IMR-90 (cell line): ENCODE measurements at regions of chr9 and their contacts with region 1.

Region 1: DNA sequence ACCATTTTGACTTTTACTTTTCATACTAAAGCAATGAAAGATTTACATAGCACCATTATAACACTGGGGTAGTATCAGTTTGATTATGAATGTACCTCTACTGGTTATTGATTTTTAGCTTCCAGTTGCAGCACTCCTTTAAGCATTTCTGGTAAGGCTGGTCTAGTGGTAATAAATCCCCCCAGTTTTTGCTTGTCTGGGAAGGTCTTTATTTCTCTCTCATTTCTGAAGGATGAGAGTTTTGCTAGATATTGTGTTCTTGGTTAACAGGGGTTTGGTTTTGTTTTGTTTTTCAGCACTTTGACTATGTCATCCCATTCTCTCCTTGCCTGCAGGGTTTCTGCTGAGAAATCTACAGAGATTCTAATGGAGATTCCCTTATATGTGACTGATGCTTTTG is 26.9 kb upstream of the IGFBPL1 start:
- DNase-seq: no peak
- ATAC-seq: no peak
- H3K4me3 ChIP-seq: no peak overlapping the region
- H3K27ac ChIP-seq: no peak overlapping the region
- H3K4me1 ChIP-seq: no peaks in the 10 kb centered on the region
- H3K27me3 ChIP-seq: peaks cover 7% of the 10 kb centered on the region
- CTCF ChIP-seq: no peak
- POLR2A ChIP-seq: no peak
- RAD21 ChIP-seq: no peak

Region 2: GRCh38 chr9:38017149-38017884 is 433.8 kb before region 1 on chr9:
- CTCF ChIA-PET with region 1: no interaction called
- POLR2A ChIA-PET with region 1: no interaction called
- dilution Hi-C with region 1: no loop called
- in situ Hi-C with region 1: no loop called
- intact Hi-C with region 1: no loop called
- DNase-seq: peak; percentile 62
- ATAC-seq: peak; percentile 34
- H3K4me3 ChIP-seq: no peak overlapping the region
- H3K27ac ChIP-seq: peak overlapping the region; percentile 65
- H3K4me1 ChIP-seq: peaks cover 41% of the 10 kb centered on the region
- H3K27me3 ChIP-seq: no peaks in the 10 kb centered on the region
- CTCF ChIP-seq: peak; percentile 29; the same call in 1 of the 2 replicates
- POLR2A ChIP-seq: no peak
- RAD21 ChIP-seq: peak; percentile 24; the same call in 1 of the 2 replicates

Region 3: GRCh38 chr9:38478211-38478610 is 27.0 kb after region 1 on chr9:
- CTCF ChIA-PET with region 1: no interaction called
- POLR2A ChIA-PET with region 1: no interaction called
- dilution Hi-C with region 1: no loop called
- in situ Hi-C with region 1: no loop called
- intact Hi-C with region 1: no loop called
- DNase-seq: no peak
- ATAC-seq: no peak
- H3K4me3 ChIP-seq: no peak overlapping the region
- H3K27ac ChIP-seq: no peak overlapping the region
- H3K4me1 ChIP-seq: no peaks in the 10 kb centered on the region
- H3K27me3 ChIP-seq: 0 out of 2 replicates have a peak, but pooled peaks cover 3% of the 10 kb centered on the region
- CTCF ChIP-seq: no peak
- POLR2A ChIP-seq: no peak
- RAD21 ChIP-seq: no peak

Region 4: DNA sequence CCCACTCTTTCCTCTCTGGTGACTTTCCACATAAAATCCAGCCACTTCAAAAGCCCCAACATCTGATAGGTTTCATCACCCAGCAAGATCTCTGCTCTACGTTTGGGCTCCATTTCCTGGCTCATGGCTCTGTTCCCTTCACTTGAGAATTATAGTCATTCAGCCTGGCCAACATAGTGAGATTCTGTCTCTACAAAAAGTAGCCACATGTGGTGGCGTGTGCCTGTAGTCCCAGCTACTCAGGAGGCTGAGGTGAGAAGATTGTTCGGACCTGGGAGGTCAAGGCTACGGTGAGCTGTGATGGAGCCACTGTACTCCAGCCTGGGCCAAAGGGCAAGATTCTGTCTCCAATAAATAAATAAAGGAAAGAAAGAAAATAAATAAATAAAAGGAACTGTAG is 56.4 kb after region 1 on chr9:
- CTCF ChIA-PET with region 1: no interaction called
- POLR2A ChIA-PET with region 1: no interaction called
- dilution Hi-C with region 1: no loop called
- in situ Hi-C with region 1: loop called (anchors 10 kb)
- intact Hi-C with region 1: no loop called
- DNase-seq: no peak
- ATAC-seq: no peak
- H3K4me3 ChIP-seq: no peak overlapping the region
- H3K27ac ChIP-seq: no peak overlapping the region
- H3K4me1 ChIP-seq: no peaks in the 10 kb centered on the region
- H3K27me3 ChIP-seq: peaks cover 1% of the 10 kb centered on the region; the same call in 1 of the 2 replicates
- CTCF ChIP-seq: no peak
- POLR2A ChIP-seq: no peak
- RAD21 ChIP-seq: no peak